Ovary (tissue), 10 donors: ENCODE measurements at regions of chr3 and their contacts with region 1.

Region 1: GRCh38 chr3:107522510-107523288 is at the start of gene BBX:
- DNase-seq: peak; percentile 88 to 98 (median 94)
- H3K4me3 ChIP-seq: peak within 1 kb of the TSS; percentile 61
- H3K27ac ChIP-seq: peak within 1 kb of the TSS; percentile 90 to 96
- H3K4me1 ChIP-seq: peaks cover 4% of the 10 kb centered on the region
- H3K27me3 ChIP-seq: no peaks in the 10 kb centered on the region
- CTCF ChIP-seq: no peak
- EP300 ChIP-seq: no peak
- POLR2A ChIP-seq: peak; percentile 50
- total RNA-seq, gene BBX: 61.8 to 114 (median 95.9) TPM

Region 2: GRCh38 chr3:107082527-107082926 is 440.2 kb before region 1 on chr3:
- intact Hi-C with region 1: no loop called
- DNase-seq: no peak
- H3K4me3 ChIP-seq: no peak overlapping the region
- H3K27ac ChIP-seq: no peak overlapping the region
- H3K4me1 ChIP-seq: no peaks in the 10 kb centered on the region
- H3K27me3 ChIP-seq: no peaks in the 10 kb centered on the region
- CTCF ChIP-seq: no peak
- EP300 ChIP-seq: no peak
- POLR2A ChIP-seq: no peak

Region 3: DNA sequence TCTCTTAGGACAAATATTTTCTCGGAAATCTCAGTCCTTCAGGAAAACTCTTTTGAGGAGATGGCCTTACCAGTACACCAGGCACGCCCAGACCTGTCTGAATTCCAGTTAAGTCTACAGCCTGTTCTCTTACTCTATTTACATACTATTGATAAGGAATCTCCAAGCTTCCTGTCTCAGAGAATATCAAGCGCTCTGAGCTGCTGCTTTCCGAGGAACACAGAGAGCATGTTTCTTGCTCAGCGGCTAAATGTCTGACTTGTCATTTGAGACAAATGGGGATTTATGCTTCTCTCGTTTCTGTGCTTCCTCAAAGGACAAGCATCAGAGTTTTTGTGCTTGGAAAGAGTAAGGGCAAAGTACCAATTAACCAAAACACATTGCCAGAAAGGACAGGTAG is 257.8 kb before region 1 on chr3:
- intact Hi-C with region 1: loop called in 2 of 4 experiments (anchors 10 kb)
- DNase-seq: no peak
- H3K4me3 ChIP-seq: no peak overlapping the region
- H3K27ac ChIP-seq: peak overlapping the region in 1 of 2 donors; percentile 36
- H3K4me1 ChIP-seq: peaks cover 2% of the 10 kb centered on the region
- H3K27me3 ChIP-seq: no peaks in the 10 kb centered on the region
- CTCF ChIP-seq: no peak
- EP300 ChIP-seq: no peak
- POLR2A ChIP-seq: no peak

Region 4: GRCh38 chr3:107271787-107272387 is 250.8 kb before region 1 on chr3:
- intact Hi-C with region 1: loop called in 2 of 4 experiments (anchors 10 kb)
- DNase-seq: no peak
- H3K4me3 ChIP-seq: no peak overlapping the region
- H3K27ac ChIP-seq: no peak overlapping the region
- H3K4me1 ChIP-seq: no peaks in the 10 kb centered on the region
- H3K27me3 ChIP-seq: no peaks in the 10 kb centered on the region
- CTCF ChIP-seq: peak; percentile 46 to 68 (median 63)
- EP300 ChIP-seq: no peak
- POLR2A ChIP-seq: no peak

Region 5: DNA sequence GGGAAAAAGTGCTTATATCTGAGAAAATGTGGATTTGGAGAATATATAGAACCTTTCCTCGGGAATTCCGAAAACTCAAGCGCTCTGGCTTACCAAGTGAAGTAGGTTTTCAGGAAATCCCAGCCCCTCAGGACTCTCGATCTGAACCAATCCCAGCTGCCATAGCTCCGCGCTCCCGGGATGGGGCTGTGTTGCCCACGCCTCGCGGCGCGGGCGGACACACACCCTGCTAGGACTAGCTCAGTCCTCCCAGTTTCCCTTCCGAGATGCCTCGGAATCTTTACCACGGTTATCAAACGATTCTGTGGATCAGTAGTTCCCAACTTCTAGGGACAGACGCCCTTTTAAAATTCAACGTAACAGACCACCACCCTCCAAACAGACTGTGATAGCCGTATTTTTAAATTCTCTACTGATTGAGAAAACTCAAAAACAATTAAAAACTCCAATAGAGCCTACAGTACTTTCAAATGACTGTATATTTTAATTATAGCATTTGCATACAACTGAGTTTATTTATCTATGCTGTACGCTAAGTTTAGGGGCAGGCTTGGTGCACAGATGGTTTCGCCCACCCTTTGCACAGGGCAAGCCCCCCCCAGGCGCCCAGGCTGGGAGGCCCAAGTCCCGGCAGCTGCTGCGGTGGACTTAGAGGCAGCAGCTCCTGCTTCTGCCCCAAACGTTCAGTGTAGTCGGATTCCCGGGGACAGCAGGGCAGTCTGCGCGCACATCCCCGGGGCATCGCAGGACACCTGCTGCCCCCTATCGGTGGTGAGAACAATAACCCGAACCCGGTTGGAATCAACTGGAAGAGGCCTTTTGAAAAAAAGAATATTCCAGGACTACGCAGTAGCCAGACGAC is 93.1 kb before region 1 on chr3:
- intact Hi-C with region 1: loop called in 3 of 4 experiments (anchors 5 to 10 kb)
- DNase-seq: peak; percentile 81 to 84 (median 83)
- H3K4me3 ChIP-seq: peak overlapping the region; percentile 77
- H3K27ac ChIP-seq: peak overlapping the region; percentile 84 to 99
- H3K4me1 ChIP-seq: no peaks in the 10 kb centered on the region
- H3K27me3 ChIP-seq: no peaks in the 10 kb centered on the region
- CTCF ChIP-seq: peak; percentile 80 to 88 (median 86)
- EP300 ChIP-seq: no peak
- POLR2A ChIP-seq: peak; percentile 37